Motor neuron (in vitro differentiated cells): ENCODE measurements at regions of chr3 and their contacts with region 1.

Region 1: DNA sequence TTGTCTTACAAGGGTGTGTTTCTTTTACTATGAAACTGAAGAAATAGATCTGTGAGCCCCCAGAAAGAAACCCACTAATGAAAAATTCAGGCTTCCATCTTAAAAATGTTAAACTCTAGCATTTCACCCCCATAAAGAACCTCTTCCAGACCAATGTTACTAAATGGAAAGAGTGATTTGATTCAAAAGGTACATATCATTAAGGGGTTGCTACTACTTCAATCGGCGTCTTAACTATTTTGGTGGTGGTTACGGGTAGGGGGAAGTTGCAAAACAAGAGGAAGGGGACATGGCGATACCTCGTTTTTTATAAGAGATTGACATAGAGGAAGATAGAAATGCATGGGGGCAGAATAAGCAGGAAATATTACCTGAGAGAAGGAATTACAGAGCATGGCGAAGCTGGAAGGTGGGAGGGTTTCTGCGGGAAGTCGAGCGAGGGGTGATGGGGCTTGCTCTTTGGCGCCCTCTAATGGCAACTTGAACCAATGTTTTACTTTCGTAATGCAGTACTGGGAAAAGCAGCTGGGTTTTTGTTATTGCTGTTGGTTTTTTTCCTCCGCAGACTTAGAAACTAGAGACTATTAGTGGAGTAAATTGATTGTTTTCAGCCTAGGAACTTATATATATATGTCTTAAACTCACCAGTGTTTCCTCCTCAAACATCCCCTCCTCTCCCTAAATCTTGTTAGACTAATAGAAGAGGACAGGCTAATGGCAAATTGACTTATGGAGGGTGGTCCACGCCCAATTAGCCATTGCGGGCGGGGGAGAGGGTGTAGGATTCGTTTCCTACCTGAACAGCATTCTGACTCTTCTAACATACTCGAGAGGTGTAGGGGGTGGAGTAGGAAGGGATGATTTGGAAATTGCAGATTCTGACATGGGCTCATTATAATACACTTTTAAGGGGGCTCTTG is 11.3 kb upstream of the SOX2 start:
- ATAC-seq: peak; percentile 47 to 85 (median 68)
- H3K4me3 ChIP-seq: peak overlapping the region in 2 of 5 donors; percentile 17 to 38
- H3K27ac ChIP-seq: no peak overlapping the region
- H3K4me1 ChIP-seq: peaks cover 20 to 31% of the 10 kb centered on the region in 2 donors

Region 2: DNA sequence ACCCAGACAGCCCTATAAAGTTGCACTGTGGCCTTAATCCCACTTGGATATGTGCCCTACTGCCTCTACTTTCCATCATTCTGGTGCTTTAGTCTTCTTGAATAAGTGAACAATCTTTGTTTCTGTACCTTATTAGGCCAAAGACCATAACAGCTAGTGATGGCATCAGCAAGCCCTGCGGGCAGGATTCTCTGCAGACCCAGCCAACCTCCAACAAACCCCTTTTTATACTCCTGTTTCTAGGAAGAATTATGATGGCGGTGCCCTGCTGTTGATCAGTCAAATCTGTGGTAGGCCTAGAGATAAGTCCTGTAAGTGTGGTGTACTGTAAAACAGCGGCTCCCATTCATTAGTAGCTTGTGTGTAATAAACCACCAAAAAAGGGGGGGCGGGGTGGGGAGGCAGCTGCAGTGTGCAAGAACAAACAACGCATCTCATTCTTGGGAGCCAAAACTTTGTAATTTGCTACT is 51.8 kb after region 1 on chr3:
- in situ Hi-C with region 1: no loop called
- ATAC-seq: peak in 3 of 8 experiments; percentile 42 to 44 (median 42)
- H3K4me3 ChIP-seq: no peak overlapping the region
- H3K27ac ChIP-seq: no peak overlapping the region
- H3K4me1 ChIP-seq: peaks cover 27 to 35% of the 10 kb centered on the region in 2 donors

Region 3: DNA sequence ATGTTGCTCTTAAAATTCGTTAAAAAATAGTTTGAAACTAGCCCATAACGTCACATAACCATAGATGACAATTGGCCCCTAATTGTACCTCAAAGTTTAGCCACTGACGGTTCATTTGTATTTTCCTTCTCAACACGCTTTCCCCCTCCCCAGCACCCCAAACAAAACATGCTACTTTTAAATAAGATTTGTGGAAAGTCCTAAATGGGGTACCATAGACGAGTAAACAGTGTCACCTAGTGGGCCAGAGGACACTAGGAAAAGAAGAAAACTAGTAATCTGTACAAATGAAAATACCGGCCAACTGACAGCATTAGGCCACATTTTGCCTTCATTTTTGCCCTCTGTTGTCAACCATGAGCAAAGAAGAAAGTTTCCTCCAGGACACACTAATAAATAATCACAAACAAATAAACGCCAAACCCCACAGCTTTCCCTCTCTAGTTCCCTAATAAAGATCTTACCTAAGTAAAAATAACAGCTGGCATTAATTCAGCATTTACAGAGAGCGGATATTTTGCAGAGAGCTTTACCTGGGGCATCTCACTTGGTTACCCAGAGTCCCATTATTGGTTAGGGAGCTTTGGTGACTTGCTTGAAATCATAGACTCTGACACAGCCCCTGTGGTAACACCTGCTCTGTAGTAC is 917.8 kb after region 1 on chr3:
- in situ Hi-C with region 1: loop called in 3 of 9 experiments (anchors 10 to 25 kb)
- ATAC-seq: peak in 7 of 8 experiments; percentile 37 to 69 (median 55)
- H3K4me3 ChIP-seq: no peak overlapping the region
- H3K27ac ChIP-seq: no peak overlapping the region
- H3K4me1 ChIP-seq: peaks cover 18 to 23% of the 10 kb centered on the region in 2 donors

Region 4: DNA sequence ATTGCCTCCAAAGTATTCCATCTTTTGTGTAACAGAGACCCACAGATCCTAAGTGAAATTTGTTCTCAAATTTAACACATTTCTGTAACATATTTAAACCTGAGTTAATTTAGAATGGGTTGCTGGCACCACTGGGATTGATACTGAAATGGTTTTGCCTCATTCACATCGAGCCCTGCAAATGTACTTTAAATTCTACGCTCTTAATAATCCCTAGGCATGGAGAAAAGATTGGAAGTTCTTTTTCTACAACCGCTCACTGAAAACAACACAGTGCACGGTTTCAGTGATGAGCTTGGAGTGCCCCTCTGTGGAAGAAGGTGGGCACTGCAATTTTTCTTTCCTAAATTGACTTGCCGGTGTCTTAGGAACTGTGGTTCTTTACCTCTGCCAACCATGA is 983.0 kb after region 1 on chr3:
- in situ Hi-C with region 1: loop called in 4 of 9 experiments (anchors 25 kb)
- ATAC-seq: peak; percentile 69 to 84 (median 74)
- H3K4me3 ChIP-seq: peak overlapping the region in 2 of 5 donors; percentile 51 to 61
- H3K27ac ChIP-seq: no peak overlapping the region
- H3K4me1 ChIP-seq: peaks cover 5 to 6% of the 10 kb centered on the region in 2 donors